ENCODE measurements at regions of chr1 and their contacts with region 1.

Region 1: GRCh38 chr1:159197561-159198557 is 6.8 kb upstream of the ACKR1 start:
- DNase-seq: peak; percentile 75
- H3K4me3 Mint-ChIP-seq: no peak overlapping the region
- H3K27ac Mint-ChIP-seq: no peak overlapping the region
- H3K4me1 Mint-ChIP-seq: peaks cover 2% of the 10 kb centered on the region
- H3K27me3 Mint-ChIP-seq: peaks cover 36% of the 10 kb centered on the region

Region 2: DNA sequence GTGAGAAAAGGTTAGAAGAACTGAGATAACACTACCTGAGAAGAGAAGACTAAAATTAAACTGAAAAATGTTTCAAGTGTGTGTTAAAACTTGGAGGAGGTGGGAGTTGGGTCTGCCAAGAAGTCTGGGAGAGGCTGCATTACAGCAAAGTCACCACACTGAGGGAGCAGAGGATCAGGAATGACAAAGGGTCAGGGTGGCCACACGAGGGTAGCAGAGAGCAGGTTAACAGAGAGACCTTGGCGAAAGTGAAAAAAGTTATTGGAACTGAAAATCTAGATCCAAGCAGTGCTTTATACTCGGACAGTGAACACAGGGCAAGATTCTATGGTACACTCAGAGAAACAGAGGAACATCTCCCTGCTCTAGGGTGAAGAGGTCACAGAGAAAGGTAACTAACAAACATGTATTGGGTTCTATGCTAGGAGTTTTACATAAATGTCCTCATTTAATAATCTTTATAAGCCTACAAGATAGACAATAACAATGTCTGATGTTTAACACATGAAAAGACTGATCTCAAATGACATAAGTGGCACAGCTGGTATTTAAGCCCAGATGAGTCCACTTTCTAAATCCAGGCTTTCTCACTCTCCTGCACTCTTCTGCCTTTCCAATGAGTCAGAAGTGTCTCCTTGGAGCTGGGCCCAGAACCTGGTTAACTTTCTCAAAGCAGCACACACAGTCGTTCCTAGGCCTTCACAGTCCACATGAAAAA is 36.7 kb before region 1 on chr1:
- CTCF ChIA-PET with region 1: interaction called, 45 read pairs
- POLR2A ChIA-PET with region 1: no interaction called
- intact Hi-C with region 1: loop called (anchors 5 kb)
- DNase-seq: peak; percentile 77
- H3K4me3 Mint-ChIP-seq: no peak overlapping the region
- H3K27ac Mint-ChIP-seq: no peak overlapping the region
- H3K4me1 Mint-ChIP-seq: peaks cover 2% of the 10 kb centered on the region
- H3K27me3 Mint-ChIP-seq: peaks cover 38% of the 10 kb centered on the region

Region 3: GRCh38 chr1:159179906-159180305 is 18.0 kb before region 1 on chr1:
- CTCF ChIA-PET with region 1: interaction called, 10 read pairs
- POLR2A ChIA-PET with region 1: no interaction called
- intact Hi-C with region 1: no loop called
- DNase-seq: no peak
- H3K4me3 Mint-ChIP-seq: no peak overlapping the region
- H3K27ac Mint-ChIP-seq: no peak overlapping the region
- H3K4me1 Mint-ChIP-seq: no peaks in the 10 kb centered on the region
- H3K27me3 Mint-ChIP-seq: peaks cover 29% of the 10 kb centered on the region

Region 4: DNA sequence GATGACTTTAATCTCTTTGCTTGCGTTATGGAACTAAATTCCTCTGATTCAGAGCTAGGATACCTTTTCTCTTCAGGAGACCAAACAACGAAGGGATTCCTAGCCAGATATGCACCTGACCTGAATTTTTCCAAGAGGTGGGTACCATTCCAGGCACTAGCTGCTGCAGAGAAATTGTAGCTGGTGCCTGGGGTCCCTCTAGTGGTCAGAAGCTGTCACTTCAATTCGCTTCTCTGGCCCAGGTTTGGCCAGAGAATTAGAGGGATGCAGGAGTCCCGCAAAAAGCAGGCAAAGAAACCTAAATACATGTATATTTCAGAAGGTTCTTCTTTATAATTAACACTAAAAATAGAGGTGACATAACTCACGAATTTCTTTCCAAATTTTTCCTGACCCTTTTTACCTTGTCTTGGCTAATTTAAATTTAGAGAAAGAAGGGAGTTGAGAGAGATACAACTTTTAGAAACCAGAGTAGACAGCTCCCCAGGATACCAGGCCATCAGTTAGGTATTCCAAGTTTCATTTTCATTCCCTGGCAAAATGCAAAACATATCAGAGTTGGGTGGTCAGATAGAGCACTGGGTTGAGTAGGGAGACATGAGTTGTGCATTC is 16.4 kb after region 1 on chr1:
- CTCF ChIA-PET with region 1: interaction called, 51 read pairs
- POLR2A ChIA-PET with region 1: no interaction called
- intact Hi-C with region 1: no loop called
- DNase-seq: peak; percentile 54
- H3K4me3 Mint-ChIP-seq: no peak overlapping the region
- H3K27ac Mint-ChIP-seq: no peak overlapping the region
- H3K4me1 Mint-ChIP-seq: no peaks in the 10 kb centered on the region
- H3K27me3 Mint-ChIP-seq: peaks cover 29% of the 10 kb centered on the region

Measured in activated CD4-positive, alpha-beta memory T cell treated with anti-CD3 and anti-CD28 coated beads for 36 hours (primary cell).